Activated T-helper 2 cell treated with anti-CD3 and anti-CD28 coated beads, Interferon-gamma antibody, Interleukin-2, Interleukin-4, amounts not matched to agents 10 μg/mL and 5 μg/mL and 100 μg/mL, durations not matched to agents 14 hours and 24 hours and 36 hours (primary cell): ENCODE measurements at regions of chr5 and their contacts with region 1.

Region 1: GRCh38 chr5:115544436-115545350 is at the start of gene FEM1C:
- DNase-seq: peak; percentile 92
- H3K4me3 Mint-ChIP-seq: peak within 1 kb of the TSS; percentile 97
- H3K27ac Mint-ChIP-seq: peak within 1 kb of the TSS; percentile 99
- H3K4me1 Mint-ChIP-seq: peaks cover 39% of the 10 kb centered on the region
- H3K27me3 Mint-ChIP-seq: no peaks in the 10 kb centered on the region
- total RNA-seq, gene FEM1C: 14.3 and 15.0 TPM in 2 replicates

Region 2: DNA sequence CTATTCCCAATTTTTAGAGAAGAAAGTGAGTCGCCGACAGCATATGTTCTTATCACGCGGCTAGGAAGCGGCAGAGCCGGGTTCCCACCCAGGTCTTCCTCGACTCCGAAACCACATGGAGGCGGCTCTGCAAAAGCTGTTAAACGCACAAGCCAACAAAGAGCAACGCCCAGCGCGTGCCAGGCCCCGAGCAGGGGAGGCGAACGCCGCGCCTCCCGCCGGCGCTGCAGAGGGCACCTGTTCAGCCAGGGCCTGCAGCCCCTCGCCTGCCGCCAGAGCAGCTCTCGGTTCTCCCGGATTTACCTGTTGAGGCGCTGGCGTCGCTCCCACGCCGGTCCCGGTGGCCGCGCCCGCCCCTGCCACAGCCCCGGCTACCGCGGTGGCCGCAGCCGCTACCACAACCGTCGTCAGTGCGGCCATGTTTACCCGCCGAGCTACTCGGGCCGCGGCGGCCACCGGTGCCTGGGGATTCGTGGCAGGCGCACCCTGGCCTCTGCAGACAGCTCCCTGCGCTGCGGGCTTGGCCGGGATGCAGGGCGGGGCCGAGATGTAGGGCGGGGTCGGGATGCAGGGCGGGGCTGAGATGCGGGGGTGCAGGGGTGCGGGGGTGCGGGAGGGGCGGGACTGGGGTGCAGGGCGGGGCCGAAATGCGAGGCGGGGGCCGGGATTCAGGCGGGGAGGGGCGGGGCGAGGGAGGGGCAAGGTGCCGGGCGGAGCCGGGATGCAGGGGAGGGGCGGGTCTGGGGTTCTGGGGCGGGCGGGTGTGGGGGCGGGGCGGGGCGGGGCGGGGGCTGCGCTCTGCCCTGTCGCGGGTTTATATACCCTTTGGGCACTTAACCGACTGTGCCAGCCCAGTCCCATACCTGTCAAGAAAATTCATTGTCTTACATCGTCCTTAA is 248.3 kb before region 1 on chr5 and contains the start of gene CCDC112:
- intact Hi-C with region 1: loop called (anchors 2 kb)
- DNase-seq: peak; percentile 57
- H3K4me3 Mint-ChIP-seq: peak within 1 kb of the TSS; percentile 82
- H3K27ac Mint-ChIP-seq: no peak within 1 kb of the TSS
- H3K4me1 Mint-ChIP-seq: peaks cover 5% of the 10 kb centered on the region
- H3K27me3 Mint-ChIP-seq: peaks cover 55% of the 10 kb centered on the region
- total RNA-seq, gene CCDC112: 0.32 and 0.34 TPM in 2 replicates

Region 3: GRCh38 chr5:115472271-115473025 is 72.2 kb before region 1 on chr5:
- intact Hi-C with region 1: no loop called
- DNase-seq: no peak
- H3K4me3 Mint-ChIP-seq: no peak overlapping the region
- H3K27ac Mint-ChIP-seq: no peak overlapping the region
- H3K4me1 Mint-ChIP-seq: no peaks in the 10 kb centered on the region
- H3K27me3 Mint-ChIP-seq: peaks cover 44% of the 10 kb centered on the region

Region 4: GRCh38 chr5:115487756-115488155 is 56.9 kb before region 1 on chr5:
- intact Hi-C with region 1: loop called (anchors 1 kb)
- DNase-seq: no peak
- H3K4me3 Mint-ChIP-seq: no peak overlapping the region
- H3K27ac Mint-ChIP-seq: peak overlapping the region; percentile 70
- H3K4me1 Mint-ChIP-seq: peaks cover 16% of the 10 kb centered on the region
- H3K27me3 Mint-ChIP-seq: peaks cover 5% of the 10 kb centered on the region

Region 5: GRCh38 chr5:115601701-115602590 is 57.3 kb after region 1 on chr5 and contains the start of gene TICAM2:
- intact Hi-C with region 1: loop called (anchors 1 kb)
- DNase-seq: peak; percentile 48
- H3K4me3 Mint-ChIP-seq: peak within 1 kb of the TSS; percentile 68
- H3K27ac Mint-ChIP-seq: peak within 1 kb of the TSS; percentile 67
- H3K4me1 Mint-ChIP-seq: peaks cover 24% of the 10 kb centered on the region
- H3K27me3 Mint-ChIP-seq: peaks cover 6% of the 10 kb centered on the region
- total RNA-seq, gene TICAM2: 0.85 TPM in 1 of 2 replicates, not detected in the other

Region 6: DNA sequence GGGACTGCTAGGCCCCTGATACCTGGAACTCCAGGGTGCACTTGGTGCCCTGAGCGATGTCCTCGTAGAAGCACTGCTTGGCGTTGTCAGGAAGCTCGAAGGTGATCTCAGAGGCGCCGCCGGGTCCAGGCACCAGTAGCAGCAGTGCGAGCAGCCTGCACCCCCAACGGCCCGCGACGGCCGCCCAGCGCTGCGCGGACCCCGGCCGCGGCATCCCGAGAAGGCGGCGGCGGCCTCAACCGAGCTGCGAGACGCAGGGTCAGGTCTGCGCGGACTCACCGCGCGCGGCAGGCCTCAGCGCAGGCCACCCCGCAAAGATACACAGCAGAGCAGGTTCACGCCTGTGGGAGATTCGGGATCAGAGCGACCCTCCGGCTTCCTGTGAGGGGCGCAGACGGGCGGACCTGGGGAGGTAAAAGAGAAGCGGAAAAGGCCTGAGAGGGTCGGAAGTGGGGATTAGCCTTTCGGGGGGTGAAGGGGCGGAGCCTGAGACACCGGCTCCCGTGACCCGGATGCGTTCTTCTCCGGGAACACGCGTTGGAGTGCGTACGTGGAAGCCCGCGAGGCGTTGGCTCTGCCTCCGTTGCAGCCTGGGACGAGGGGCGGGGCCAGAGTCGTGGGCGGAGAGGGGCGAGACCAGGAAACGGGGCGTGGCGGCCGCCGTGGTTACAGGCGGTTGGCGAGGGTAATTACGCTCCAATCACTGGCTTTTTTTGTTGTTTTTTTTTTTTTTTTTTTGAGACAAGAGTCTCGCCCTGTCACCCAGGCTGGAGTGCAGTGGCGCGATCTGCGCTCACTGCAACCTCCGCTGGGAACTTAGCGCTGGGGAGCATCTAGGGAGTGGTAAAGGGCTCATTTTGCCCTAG is 81.1 kb after region 1 on chr5 and contains the start of gene TMED7:
- intact Hi-C with region 1: loop called (anchors 1 kb)
- DNase-seq: peak; percentile 98
- H3K4me3 Mint-ChIP-seq: no peak within 1 kb of the TSS
- H3K27ac Mint-ChIP-seq: peak within 1 kb of the TSS; percentile 89
- H3K4me1 Mint-ChIP-seq: peaks cover 20% of the 10 kb centered on the region
- H3K27me3 Mint-ChIP-seq: peaks cover 13% of the 10 kb centered on the region
- total RNA-seq, gene TMED7: 40.2 and 40.9 TPM in 2 replicates

Region 7: DNA sequence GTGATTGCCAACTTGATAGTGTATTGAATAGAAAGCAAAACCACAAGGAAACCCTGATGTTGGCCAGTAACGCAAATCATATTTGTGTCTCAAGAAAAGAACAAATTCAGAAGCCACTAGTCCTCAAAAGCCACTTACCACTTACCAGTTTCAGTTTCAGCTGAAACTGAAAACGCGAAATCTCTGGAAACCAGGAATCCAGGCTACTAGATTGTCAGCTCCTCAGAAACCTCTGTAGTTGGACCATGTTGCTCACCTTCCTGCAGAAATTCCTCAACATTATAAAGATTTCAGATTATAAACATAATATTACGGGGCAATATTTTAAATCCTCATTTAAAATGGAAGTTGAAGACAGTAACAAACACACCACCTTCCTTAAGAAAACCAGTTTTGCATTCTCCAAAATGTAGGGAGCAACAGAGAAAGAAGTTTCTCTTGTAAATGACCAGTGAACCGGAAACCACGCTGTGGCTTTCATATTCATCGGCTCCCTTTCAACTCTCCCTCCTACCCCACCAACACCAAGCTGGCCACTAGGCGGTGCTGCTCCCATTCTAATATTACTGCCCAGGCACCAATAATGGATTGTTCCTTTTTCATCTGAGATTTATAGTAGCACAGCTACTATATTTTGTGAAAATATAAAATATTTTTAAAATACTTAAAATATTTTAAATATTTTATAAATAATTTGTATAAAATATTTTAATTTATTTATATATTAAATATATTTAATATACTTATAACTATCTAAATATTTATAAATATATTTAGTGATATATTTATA is 89.8 kb after region 1 on chr5:
- intact Hi-C with region 1: loop called (anchors 2 kb)
- DNase-seq: peak; percentile 75
- H3K4me3 Mint-ChIP-seq: peak overlapping the region; percentile 33
- H3K27ac Mint-ChIP-seq: no peak overlapping the region
- H3K4me1 Mint-ChIP-seq: peaks cover 41% of the 10 kb centered on the region
- H3K27me3 Mint-ChIP-seq: peaks cover 57% of the 10 kb centered on the region

Region 8: GRCh38 chr5:116084871-116085715 is 540.4 kb after region 1 on chr5 and contains the start of gene COMMD10:
- intact Hi-C with region 1: loop called (anchors 5 kb)
- DNase-seq: peak; percentile 71
- H3K4me3 Mint-ChIP-seq: peak within 1 kb of the TSS; percentile 84
- H3K27ac Mint-ChIP-seq: peak within 1 kb of the TSS; percentile 80
- H3K4me1 Mint-ChIP-seq: peaks cover 32% of the 10 kb centered on the region
- H3K27me3 Mint-ChIP-seq: no peaks in the 10 kb centered on the region
- total RNA-seq, gene COMMD10: 23.6 and 26.1 TPM in 2 replicates